CD14-positive monocyte (primary cell): ENCODE measurements at regions of chr14 and their contacts with region 1.

Region 1: DNA sequence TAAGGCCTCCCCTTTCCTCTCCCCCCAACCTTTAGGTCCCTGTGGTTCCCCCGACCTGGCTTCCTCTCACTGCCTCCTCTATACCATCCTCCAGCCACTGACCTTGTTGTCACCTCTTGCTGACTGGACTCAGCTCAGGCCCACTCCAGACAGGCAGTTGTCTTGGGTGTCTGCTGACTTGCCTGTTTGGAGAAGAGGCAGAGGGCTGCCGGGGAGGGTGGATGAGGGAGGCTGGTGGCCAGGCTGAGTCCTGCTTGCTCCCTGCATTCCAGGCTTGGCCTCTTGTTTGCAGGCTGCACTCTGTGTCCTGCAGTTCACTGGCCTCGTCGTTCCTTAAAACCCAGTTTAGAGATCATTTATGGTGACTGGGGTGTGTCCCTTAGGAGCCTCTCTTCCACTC is 31.0 kb upstream of the RD3L start:
- DNase-seq: no peak
- H3K4me3 ChIP-seq: no peak overlapping the region
- H3K4me3 Mint-ChIP-seq: no peak overlapping the region
- H3K27ac ChIP-seq: no peak overlapping the region
- H3K27ac Mint-ChIP-seq: peak overlapping the region in 1 of 7 donors; percentile 35
- H3K4me1 ChIP-seq: no peaks in the 10 kb centered on the region
- H3K4me1 Mint-ChIP-seq: no peaks in the 10 kb centered on the region
- H3K27me3 ChIP-seq: no peaks in the 10 kb centered on the region
- H3K27me3 Mint-ChIP-seq: peaks cover 0 to 2% (median 0%) of the 10 kb centered on the region in 3 donors
- CTCF ChIP-seq: no peak

Region 2: DNA sequence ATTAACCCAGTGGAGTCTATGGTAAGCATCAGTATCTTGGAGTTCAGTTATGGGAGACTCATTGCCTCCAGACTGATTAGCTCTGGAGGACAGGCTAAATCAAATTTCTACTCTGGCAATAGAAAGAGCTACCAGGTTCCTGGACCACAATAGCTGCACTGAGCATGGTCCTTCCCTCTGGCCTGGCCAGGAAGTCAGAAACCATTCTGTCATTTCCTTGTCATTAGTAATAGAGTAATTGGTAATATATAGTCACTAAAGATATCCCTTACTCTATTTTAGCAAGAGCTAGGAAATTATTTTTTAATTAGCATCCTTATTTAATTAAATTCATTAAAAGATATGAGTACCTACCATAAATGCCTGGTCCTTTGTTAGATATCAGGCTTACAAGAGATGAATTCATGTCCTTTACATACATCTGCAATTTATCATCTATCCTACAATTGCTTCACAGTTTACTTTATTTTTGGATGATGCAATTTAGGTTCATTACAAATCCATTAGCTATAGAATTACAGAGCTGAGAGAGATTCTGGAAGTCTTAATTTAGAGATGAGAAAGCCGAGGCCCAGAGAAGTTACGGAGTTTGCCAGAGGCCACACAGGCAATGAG is 68.8 kb before region 1 on chr14:
- intact Hi-C with region 1: loop called in 1 of 2 experiments (anchors 5 kb)
- DNase-seq: no peak
- H3K4me3 ChIP-seq: no peak overlapping the region
- H3K4me3 Mint-ChIP-seq: no peak overlapping the region
- H3K27ac ChIP-seq: no peak overlapping the region
- H3K27ac Mint-ChIP-seq: no peak overlapping the region
- H3K4me1 ChIP-seq: peaks cover 0 to 6% of the 10 kb centered on the region in 2 donors
- H3K4me1 Mint-ChIP-seq: peaks cover 12% of the 10 kb centered on the region
- H3K27me3 ChIP-seq: no peaks in the 10 kb centered on the region
- H3K27me3 Mint-ChIP-seq: peaks cover 3 to 6% (median 5%) of the 10 kb centered on the region in 3 donors
- CTCF ChIP-seq: no peak